ENCODE measurements at regions of chr3 and their contacts with region 1.

Region 1: GRCh38 chr3:46866720-46867549 is 3.7 kb upstream of the MYL3 start:
- DNase-seq: peak in 1 of 2 experiments; percentile 97
- H3K4me3 ChIP-seq: no peak overlapping the region
- H3K27ac ChIP-seq: no peak overlapping the region
- H3K4me1 ChIP-seq: no peaks in the 10 kb centered on the region; a peak in 1 of 7 replicates
- H3K27me3 ChIP-seq: peaks cover 0 to 7% (median 2%) of the 10 kb centered on the region in 4 experiments; a peak in 3 of 7 replicates
- CTCF ChIP-seq: peak in 2 of 3 experiments; percentile 92 to 97; a peak in 3 of 4 replicates
- EP300 ChIP-seq: no peak
- POLR2A ChIP-seq: no peak
- RAD21 ChIP-seq: peak; percentile 76 to 84

Region 2: GRCh38 chr3:46705022-46705530 is 161.9 kb before region 1 on chr3:
- CTCF ChIA-PET with region 1: interaction called, 15 read pairs
- POLR2A ChIA-PET with region 1: no interaction called
- DNase-seq: peak in 1 of 2 experiments; percentile 88
- H3K4me3 ChIP-seq: no peak overlapping the region
- H3K27ac ChIP-seq: no peak overlapping the region
- H3K4me1 ChIP-seq: peaks cover 0 to 9% (median 2%) of the 10 kb centered on the region in 4 experiments; a peak in 4 of 7 replicates
- H3K27me3 ChIP-seq: peaks cover 2 to 21% (median 19%) of the 10 kb centered on the region in 4 experiments; a peak in 6 of 7 replicates
- CTCF ChIP-seq: peak in 2 of 3 experiments; percentile 90 to 97; a peak in 3 of 4 replicates
- EP300 ChIP-seq: no peak
- POLR2A ChIP-seq: no peak
- RAD21 ChIP-seq: peak; percentile 97 to 98

Region 3: DNA sequence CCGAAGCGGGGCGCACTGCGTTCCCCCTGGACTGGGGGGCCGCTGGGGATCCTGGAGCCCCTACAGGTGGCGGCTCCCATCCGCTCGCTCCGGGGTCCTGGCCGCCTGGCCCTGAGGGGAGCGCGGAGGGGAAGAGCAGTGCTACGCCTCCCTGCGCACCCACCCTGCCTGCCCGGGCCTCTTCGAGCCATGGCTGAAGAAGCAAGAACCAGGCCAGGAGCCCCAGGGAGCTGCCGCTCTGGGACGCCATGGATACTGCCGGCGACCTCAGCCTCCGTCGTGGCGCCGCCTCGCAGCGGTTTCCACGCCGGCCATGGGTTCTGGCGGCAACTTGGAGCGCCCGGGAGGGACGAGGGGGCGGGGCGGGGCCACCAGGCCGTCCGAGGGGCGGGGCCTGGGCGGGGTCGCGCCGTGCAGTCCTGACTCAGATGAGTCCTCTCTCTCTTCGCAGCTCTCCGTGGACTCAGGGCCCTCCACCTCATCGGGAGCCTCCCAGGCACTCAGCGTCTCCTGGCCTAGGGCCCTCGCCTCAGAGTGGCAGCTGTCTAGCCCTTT is 54.6 kb before region 1 on chr3:
- CTCF ChIA-PET with region 1: no interaction called
- POLR2A ChIA-PET with region 1: no interaction called
- DNase-seq: peak; percentile 34 to 92
- H3K4me3 ChIP-seq: peak overlapping the region; percentile 33 to 68 (median 52)
- H3K27ac ChIP-seq: no peak overlapping the region
- H3K4me1 ChIP-seq: peaks cover 0 to 15% (median 6%) of the 10 kb centered on the region in 4 experiments; a peak in 6 of 7 replicates
- H3K27me3 ChIP-seq: peaks cover 0 to 8% (median 0%) of the 10 kb centered on the region in 4 experiments; a peak in 2 of 7 replicates
- CTCF ChIP-seq: no peak
- EP300 ChIP-seq: no peak
- POLR2A ChIP-seq: no peak
- RAD21 ChIP-seq: no peak

Region 4: DNA sequence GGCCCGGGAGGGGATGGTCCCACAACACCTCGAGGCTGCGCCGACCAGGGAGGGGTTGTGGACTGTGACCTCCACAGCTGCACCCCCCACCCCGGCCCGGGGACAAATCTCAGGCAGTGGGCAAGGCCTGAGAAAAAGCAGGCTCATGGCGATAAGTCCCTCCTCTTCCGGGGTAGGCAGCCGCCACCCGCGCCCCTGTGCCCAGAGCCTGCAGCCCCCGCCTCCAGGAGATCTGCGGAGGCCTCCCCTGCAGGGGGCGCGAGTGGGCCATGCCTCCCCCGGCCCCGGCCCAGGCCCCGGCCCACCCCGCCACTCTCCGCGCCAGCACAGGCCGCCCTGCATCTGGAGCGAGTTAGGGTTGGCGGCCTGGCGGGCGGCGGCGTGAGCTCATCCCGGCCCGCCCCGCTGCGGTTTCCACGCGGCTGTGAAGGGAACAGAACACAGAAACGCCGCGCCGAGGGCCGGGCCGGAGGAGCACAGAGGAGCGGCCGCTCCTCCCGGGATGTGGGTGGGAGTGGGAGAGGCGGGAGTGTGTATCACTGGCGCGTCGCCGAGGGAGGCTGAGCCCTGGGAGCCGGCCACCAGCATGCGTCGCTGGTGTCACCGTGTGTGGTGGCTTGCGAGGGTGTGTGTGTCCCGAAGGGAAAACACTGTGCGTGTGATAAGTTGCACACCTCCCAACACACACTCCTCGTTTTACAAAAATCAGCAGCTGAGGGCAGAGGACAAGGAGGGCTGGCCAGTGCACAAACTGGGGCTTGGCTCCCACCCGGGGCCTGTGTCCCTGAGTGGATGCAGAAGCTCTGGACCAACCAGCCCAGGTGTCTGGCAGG is 20.9 kb before region 1 on chr3:
- CTCF ChIA-PET with region 1: interaction called, 31 read pairs
- POLR2A ChIA-PET with region 1: interaction called, 5 read pairs
- DNase-seq: peak; percentile 56 to 89
- H3K4me3 ChIP-seq: peak overlapping the region; percentile 28 to 63 (median 37)
- H3K27ac ChIP-seq: peak overlapping the region; percentile 20; the same call in 1 of the 2 replicates
- H3K4me1 ChIP-seq: peaks cover 0 to 10% (median 8%) of the 10 kb centered on the region in 4 experiments; a peak in 6 of 7 replicates
- H3K27me3 ChIP-seq: peaks cover 0 to 13% (median 5%) of the 10 kb centered on the region in 4 experiments; a peak in 4 of 7 replicates
- CTCF ChIP-seq: peak in 2 of 3 experiments; percentile 42 to 65; a peak in 3 of 4 replicates
- EP300 ChIP-seq: no peak
- POLR2A ChIP-seq: no peak
- RAD21 ChIP-seq: peak; percentile 36 to 59; a peak in 3 of 4 replicates

Region 5: DNA sequence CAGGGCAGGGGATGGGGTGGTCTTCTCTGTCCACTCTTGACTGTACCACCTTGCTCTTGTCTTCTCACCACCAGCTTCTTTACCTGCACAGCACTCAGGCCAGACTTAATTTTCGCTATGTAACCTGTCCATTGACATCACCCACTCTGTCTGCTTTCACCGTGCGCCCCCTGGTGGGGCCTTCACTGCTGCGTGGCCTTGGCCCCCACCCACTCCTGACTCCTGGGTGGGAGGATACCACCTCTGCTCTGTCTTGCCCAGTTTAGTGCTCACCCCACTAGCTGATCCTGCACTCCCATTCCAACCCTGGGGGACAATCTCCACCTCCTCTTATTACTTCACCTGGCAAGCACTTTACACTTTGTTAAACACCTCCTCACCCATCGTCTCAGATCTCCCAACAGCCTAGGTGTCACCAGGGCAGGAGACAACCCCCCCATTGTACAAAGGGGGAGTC is 28.3 kb after region 1 on chr3:
- CTCF ChIA-PET with region 1: interaction called, 88 read pairs
- POLR2A ChIA-PET with region 1: interaction called, 3 read pairs
- DNase-seq: peak in 1 of 2 experiments; percentile 80
- H3K4me3 ChIP-seq: no peak overlapping the region
- H3K27ac ChIP-seq: no peak overlapping the region
- H3K4me1 ChIP-seq: peaks cover 4 to 18% (median 13%) of the 10 kb centered on the region in 4 experiments
- H3K27me3 ChIP-seq: peaks cover 13 to 70% (median 52%) of the 10 kb centered on the region in 4 experiments
- CTCF ChIP-seq: peak in 2 of 3 experiments; percentile 68 to 75; a peak in 3 of 4 replicates
- EP300 ChIP-seq: no peak
- POLR2A ChIP-seq: no peak
- RAD21 ChIP-seq: peak; percentile 68 to 72

Region 6: GRCh38 chr3:46923559-46924350 is 56.8 kb after region 1 on chr3:
- CTCF ChIA-PET with region 1: interaction called, 12 read pairs
- POLR2A ChIA-PET with region 1: no interaction called
- DNase-seq: peak in 1 of 2 experiments; percentile 75
- H3K4me3 ChIP-seq: no peak overlapping the region
- H3K27ac ChIP-seq: no peak overlapping the region; the same call in 1 of the 2 replicates
- H3K4me1 ChIP-seq: no peaks in the 10 kb centered on the region
- H3K27me3 ChIP-seq: no peaks in the 10 kb centered on the region
- CTCF ChIP-seq: peak; percentile 65 to 79 (median 72)
- EP300 ChIP-seq: no peak
- POLR2A ChIP-seq: no peak
- RAD21 ChIP-seq: peak; percentile 74 to 77